PC-9 (cell line): ENCODE measurements at regions of chr9 and their contacts with region 1.

Region 1: GRCh38 chr9:104747558-104748358 is at the start of gene NIPSNAP3A:
- DNase-seq: peak; percentile 71 to 87
- H3K4me3 ChIP-seq: peak within 1 kb of the TSS; percentile 94
- H3K27ac ChIP-seq: peak within 1 kb of the TSS; percentile 47
- H3K4me1 ChIP-seq: peaks cover 19% of the 10 kb centered on the region
- H3K27me3 ChIP-seq: no peaks in the 10 kb centered on the region
- CTCF ChIP-seq: no peak
- total RNA-seq, gene NIPSNAP3A: 19.8 and 21.4 TPM in 2 replicates

Region 2: DNA sequence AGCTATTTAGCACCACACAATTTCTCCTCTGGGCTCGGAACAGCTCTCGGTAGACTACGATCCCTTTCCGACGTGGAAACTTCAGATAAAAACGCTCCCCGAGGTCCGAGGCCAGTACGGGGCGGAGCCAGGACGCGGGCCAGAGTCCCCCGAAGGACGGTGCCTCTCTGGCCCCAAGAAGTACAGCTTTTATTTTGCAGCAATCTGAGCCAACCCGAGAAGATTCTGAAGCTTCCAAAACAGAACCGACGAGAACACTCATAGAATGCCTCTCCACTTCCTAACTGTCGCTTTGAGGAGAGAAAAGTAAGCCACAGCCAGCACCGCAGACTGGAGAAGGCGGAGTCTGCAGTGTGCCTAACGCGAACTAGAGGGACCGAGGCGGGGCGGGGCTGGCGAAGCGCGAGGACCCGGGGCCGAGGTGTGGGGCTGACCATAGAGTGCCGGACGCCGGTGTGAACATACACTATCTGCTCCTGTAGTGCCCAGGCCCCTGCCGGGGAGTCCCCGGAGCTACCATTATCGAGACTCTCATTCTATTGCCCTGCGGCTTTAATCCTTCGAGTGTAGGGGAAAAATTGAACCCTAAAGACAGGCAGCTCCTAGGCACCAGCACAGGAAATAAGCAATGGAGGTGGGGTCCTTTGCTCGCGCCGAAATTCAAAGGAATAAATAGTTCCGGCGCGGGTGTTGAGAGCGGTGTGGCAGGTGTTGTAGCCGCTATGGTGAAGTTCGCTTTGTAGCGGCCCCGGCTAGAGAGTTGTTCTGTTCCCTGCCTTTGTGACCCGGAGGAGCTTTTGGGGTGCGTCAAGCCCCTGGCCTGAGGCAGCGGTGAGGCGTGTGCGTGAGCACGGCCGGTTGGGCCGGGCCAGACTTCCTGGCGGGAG is 653.9 kb before region 1 on chr9 and contains the start of gene SMC2:
- CTCF ChIA-PET with region 1: no interaction called
- POLR2A ChIA-PET with region 1: no interaction called
- intact Hi-C with region 1: loop called (anchors 5 kb)
- DNase-seq: peak; percentile 75 to 95
- H3K4me3 ChIP-seq: peak within 1 kb of the TSS; percentile 71
- H3K27ac ChIP-seq: peak within 1 kb of the TSS; percentile 85
- H3K4me1 ChIP-seq: peaks cover 22% of the 10 kb centered on the region
- H3K27me3 ChIP-seq: no peaks in the 10 kb centered on the region
- CTCF ChIP-seq: no peak
- total RNA-seq, gene SMC2: 29.2 and 40.5 TPM in 2 replicates

Region 3: DNA sequence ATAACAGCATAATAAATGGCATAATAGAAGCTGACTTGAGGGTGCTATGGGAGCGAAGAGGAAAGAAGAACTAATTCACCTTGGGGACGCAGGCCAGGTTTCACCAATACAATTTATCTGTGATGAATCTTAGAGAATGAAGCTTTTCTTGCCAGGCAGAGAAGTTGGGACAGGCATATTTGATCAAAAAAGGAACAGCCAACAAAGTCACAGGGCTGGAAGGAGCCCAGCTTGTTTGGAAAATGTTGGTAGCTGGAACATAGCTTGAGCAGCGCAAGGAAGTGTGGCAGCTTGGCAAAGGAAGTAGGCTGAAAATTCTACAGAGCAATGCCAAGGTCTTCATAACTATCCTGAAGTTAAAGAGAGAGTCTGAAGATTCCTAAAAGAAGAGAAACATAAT is 425.2 kb before region 1 on chr9:
- CTCF ChIA-PET with region 1: no interaction called
- POLR2A ChIA-PET with region 1: no interaction called
- intact Hi-C with region 1: no loop called
- DNase-seq: no peak
- H3K4me3 ChIP-seq: no peak overlapping the region
- H3K27ac ChIP-seq: no peak overlapping the region
- H3K4me1 ChIP-seq: no peaks in the 10 kb centered on the region
- H3K27me3 ChIP-seq: no peaks in the 10 kb centered on the region
- CTCF ChIP-seq: no peak

Region 4: GRCh38 chr9:105694190-105694847 is 946.6 kb after region 1 on chr9 and contains the start of gene TMEM38B:
- CTCF ChIA-PET with region 1: no interaction called
- POLR2A ChIA-PET with region 1: no interaction called
- intact Hi-C with region 1: loop called (anchors 10 kb)
- DNase-seq: peak; percentile 53 to 86
- H3K4me3 ChIP-seq: peak within 1 kb of the TSS; percentile 87
- H3K27ac ChIP-seq: no peak within 1 kb of the TSS
- H3K4me1 ChIP-seq: peaks cover 15% of the 10 kb centered on the region
- H3K27me3 ChIP-seq: no peaks in the 10 kb centered on the region
- CTCF ChIP-seq: no peak
- total RNA-seq, gene TMEM38B: 19.0 and 19.5 TPM in 2 replicates

Region 5: DNA sequence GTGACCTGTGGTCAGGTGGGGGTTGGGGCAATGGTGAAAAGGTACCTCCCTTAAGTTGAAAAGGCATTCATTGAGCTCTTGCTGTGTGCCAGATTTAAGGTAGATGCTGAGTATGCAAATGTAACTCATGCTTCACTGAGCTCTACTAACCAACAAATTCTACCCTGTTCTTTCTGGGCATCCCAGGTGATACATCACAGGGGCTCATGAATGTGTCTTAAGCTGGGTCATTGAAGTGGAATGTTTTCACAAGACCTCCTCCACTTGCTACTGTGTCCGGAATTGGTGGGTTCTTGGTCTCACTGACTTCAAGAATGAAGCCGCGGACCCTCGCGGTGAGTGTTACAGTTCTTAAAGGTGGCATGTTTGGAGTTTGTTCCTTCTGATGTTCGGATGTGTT is 1752.4 kb after region 1 on chr9:
- CTCF ChIA-PET with region 1: no interaction called
- POLR2A ChIA-PET with region 1: interaction called, 10 read pairs
- intact Hi-C with region 1: no loop called
- DNase-seq: no peak
- H3K4me3 ChIP-seq: no peak overlapping the region
- H3K27ac ChIP-seq: no peak overlapping the region
- H3K4me1 ChIP-seq: no peaks in the 10 kb centered on the region
- H3K27me3 ChIP-seq: no peaks in the 10 kb centered on the region
- CTCF ChIP-seq: no peak